AG04450 (cell line): ENCODE measurements at regions of chr17 and their contacts with region 1.

Region 1: GRCh38 chr17:78013683-78014467 is 55.4 kb downstream of the TNRC6C start:
- DNase-seq: peak; percentile 51
- H3K4me3 ChIP-seq: no peak overlapping the region
- H3K27ac ChIP-seq: no peak overlapping the region
- H3K27me3 ChIP-seq: no peaks in the 10 kb centered on the region
- CTCF ChIP-seq: peak; percentile 87

Region 2: GRCh38 chr17:77542551-77543490 is 471.1 kb before region 1 on chr17:
- CTCF ChIA-PET with region 1: interaction called, 214 read pairs
- POLR2A ChIA-PET with region 1: no interaction called
- DNase-seq: peak; percentile 66
- H3K4me3 ChIP-seq: no peak overlapping the region
- H3K27ac ChIP-seq: no peak overlapping the region
- H3K27me3 ChIP-seq: peaks cover 15% of the 10 kb centered on the region
- CTCF ChIP-seq: peak; percentile 98

Region 3: DNA sequence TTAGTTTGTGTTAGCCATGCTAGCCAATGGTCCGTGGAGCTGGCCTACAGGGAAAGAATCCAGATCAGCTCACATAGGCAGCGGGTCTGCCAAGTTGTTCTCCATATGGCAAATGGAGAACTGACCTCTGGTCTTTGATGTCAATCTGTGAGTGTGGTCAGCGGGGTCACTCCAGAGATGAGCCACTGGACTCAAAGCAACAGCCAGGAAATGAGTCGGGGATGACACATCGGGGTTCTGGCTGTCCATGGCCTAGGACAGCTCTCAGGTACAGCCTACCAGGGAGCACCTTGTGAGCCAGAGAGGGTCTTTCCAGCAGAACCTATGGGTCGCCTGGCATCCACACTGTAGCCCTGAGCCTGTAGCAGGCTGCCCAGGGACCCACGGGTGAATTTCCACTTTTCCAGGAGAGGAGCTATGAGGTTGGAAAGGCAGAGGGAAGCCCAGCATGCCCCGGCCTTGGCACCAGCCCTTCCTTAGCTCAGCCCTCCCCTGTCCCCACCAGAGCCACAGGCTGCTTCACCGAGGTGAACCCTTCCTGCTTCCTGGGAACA is 258.4 kb before region 1 on chr17:
- CTCF ChIA-PET with region 1: no interaction called
- POLR2A ChIA-PET with region 1: no interaction called
- DNase-seq: no peak
- H3K4me3 ChIP-seq: no peak overlapping the region
- H3K27ac ChIP-seq: no peak overlapping the region
- H3K27me3 ChIP-seq: peaks cover 7% of the 10 kb centered on the region
- CTCF ChIP-seq: no peak

Region 4: GRCh38 chr17:77963441-77963840 is 50.4 kb before region 1 on chr17:
- CTCF ChIA-PET with region 1: interaction called, 28 read pairs
- POLR2A ChIA-PET with region 1: interaction called, 18 read pairs
- DNase-seq: peak; percentile 80
- H3K4me3 ChIP-seq: no peak overlapping the region
- H3K27ac ChIP-seq: no peak overlapping the region
- H3K27me3 ChIP-seq: no peaks in the 10 kb centered on the region
- CTCF ChIP-seq: no peak

Region 5: DNA sequence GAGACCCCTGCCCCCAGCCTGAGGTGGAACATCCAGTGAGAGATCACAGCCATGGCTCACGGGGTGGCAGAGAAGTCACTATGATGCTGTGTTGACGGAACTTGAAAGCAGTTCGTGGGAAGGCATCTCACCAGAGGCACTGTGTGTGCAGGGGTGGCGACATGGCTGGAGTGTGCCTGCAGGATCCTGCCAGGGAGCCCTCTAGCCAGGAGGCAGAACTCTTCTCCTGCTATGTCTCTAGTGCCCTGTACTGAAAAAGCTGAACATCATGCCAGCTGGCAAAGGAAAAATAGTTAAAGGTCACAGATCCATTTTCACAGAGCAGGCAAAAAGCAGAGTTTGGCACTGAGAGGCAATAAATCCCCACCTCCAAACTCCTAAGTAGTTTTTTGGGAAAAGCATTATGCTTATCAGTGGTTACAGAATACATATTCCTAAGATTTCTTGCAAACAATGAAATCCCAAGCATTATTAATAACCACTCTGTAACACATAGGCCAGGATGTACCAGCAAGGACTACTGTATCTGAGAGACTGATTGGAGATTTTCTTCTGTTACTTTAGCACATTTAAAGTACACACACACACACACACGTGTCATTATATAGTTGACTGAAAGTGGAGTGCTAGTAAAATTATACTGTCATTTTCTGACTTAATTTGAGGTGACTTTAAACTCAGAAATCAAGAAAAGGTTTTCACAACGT is 18.6 kb before region 1 on chr17:
- CTCF ChIA-PET with region 1: interaction called, 11 read pairs
- POLR2A ChIA-PET with region 1: no interaction called
- DNase-seq: no peak
- H3K4me3 ChIP-seq: no peak overlapping the region
- H3K27ac ChIP-seq: no peak overlapping the region
- H3K27me3 ChIP-seq: no peaks in the 10 kb centered on the region
- CTCF ChIP-seq: no peak

Region 6: DNA sequence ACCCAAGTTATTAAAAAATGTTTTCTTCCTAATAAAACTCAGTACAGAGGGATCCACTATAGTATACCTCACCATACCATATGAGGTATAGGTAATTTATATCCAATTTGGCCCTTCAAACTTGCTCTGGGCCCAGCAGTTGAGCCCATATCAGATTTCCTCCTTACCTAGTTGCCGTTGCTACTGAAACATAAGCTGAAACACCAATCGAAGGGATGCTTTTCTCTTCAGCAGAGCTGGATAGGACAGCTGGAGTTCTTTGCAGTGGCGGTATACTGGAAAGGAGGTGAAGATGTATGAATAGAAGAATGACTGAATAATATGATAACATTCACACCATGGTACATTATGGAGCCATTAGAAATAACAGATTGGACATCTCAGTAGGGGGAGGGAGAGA is 12.7 kb before region 1 on chr17:
- CTCF ChIA-PET with region 1: interaction called, 42 read pairs
- POLR2A ChIA-PET with region 1: no interaction called
- DNase-seq: no peak
- H3K4me3 ChIP-seq: no peak overlapping the region
- H3K27ac ChIP-seq: no peak overlapping the region
- H3K27me3 ChIP-seq: no peaks in the 10 kb centered on the region
- CTCF ChIP-seq: no peak

Region 7: DNA sequence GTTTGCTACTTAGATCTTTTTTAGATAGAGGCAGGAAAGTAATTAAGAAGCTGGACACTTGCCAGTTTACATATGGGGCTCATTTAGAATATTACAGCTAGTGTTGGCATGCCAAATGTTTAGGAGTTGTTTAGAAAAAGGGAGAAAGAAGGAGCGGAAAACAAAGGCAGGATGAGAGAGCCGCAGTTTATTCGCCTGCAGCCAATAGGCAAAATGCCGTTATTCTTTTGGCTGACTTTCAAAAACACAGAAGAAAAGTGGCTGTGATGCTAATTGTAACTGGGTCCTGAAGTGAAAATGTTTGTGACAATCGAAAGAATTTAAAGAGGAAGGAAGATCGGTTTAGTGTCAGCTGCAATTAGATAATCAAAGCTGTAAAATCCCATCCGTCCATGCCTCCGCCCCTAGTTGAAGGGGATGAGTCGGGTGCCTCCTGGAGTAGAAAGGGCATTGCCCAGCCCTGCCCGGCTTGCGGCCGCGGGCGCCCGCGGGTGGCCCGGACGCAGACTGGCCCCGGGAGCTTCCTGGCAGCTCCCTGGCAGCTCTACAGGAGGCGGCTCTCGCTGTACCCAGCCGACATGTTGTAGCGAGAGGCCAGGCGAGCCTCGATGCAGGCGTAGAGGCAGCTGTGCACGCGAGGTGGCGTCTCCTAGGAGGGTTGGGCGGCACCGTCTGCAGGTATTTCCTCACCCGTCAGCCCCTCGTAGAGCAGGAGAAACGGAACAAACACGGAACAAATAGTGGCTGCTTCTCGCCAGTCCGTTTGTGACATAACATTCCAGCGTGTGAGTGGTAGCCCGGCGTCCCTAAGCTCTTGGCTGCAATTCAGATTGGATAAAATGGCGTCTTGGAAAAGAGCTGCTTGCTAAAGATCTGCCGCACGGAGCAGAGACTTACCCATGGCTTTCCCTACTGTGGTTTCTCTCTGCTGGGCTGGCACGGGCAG is 26.8 kb after region 1 on chr17:
- CTCF ChIA-PET with region 1: interaction called, 23 read pairs
- POLR2A ChIA-PET with region 1: no interaction called
- DNase-seq: no peak
- H3K4me3 ChIP-seq: peak overlapping the region; percentile 73
- H3K27ac ChIP-seq: peak overlapping the region; percentile 89
- H3K27me3 ChIP-seq: no peaks in the 10 kb centered on the region
- CTCF ChIP-seq: peak; percentile 17; the same call in 1 of the 2 replicates